ENCODE measurements at regions of chr14 and their contacts with region 1.

Region 1: DNA sequence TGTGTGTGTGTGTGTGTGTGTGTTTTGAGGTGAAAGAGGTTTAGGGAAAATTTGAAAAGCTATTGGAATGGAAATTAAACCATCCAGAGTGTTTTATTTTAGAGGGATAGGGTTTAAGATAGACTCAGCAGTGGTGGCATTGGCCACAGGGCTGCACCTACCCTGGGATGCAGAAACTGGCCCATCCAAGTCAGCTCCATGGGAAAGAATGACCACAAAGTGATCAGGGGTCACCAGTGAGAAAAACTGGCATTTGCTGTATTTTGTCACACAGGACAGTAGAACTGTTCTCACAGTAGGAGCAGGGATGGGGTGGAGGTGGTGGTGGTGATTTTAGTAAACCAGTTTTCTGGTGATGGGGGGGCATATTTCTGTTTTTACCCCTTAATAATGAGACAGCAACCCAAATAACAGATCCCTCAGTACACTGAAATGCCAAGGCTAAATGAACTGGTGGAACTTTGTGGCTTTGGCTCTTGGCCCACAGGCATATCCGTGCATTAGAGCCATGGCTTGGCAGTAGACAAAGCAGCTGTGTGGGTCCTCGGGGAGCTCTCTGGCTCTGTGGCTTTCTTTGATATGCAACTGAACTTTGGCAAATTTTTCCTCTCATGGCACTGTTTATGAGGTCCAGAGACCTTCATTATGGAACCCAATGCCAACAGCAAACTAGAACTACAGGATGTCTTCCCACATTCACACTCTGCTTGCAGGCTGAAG is 348.3 kb downstream of the ZFP36L1 start:
- DNase-seq: no peak
- CTCF ChIP-seq: no peak

Region 2: DNA sequence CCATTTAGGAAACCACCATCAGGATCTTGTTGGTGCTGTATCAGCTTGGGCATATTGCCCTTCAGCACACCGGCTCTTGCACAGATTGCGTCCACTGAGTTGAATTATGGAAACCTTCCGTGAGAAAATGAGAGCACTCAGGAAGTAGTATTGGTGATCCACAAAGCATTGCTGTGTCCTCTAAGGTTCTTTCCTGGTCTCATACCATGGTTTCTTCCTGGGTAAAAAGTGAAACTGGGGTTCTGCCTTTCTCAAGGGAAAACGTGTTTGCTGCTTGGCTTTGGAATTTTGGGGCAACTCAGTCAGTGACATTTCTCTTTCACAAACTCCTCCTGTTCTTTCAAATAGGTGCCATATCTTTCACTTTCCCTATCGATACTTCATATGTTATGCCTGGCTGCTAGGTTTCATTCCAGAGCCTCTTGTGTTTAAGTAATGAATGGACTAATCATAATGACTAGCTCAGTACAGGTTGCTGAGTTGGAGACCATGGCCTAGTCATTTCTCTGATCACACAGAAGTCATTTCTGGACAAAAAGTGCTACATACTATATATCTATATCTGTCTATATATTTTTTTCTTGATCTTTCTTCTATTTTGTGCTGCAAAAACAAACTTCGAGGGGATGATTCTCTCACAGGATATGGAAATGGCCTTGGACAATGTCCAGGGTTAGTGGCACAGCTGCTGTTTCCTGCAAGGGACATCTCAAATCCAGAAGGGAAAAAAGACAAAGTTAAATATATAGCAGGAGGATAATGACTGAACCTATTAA is 75.1 kb before region 1 on chr14:
- CTCF ChIA-PET with region 1: no interaction called
- POLR2A ChIA-PET with region 1: no interaction called
- DNase-seq: peak; percentile 31
- CTCF ChIP-seq: no peak

Region 3: GRCh38 chr14:68476212-68476907 is 31.8 kb after region 1 on chr14:
- CTCF ChIA-PET with region 1: interaction called, 10 read pairs
- POLR2A ChIA-PET with region 1: no interaction called
- DNase-seq: peak; percentile 54
- CTCF ChIP-seq: no peak

Region 4: DNA sequence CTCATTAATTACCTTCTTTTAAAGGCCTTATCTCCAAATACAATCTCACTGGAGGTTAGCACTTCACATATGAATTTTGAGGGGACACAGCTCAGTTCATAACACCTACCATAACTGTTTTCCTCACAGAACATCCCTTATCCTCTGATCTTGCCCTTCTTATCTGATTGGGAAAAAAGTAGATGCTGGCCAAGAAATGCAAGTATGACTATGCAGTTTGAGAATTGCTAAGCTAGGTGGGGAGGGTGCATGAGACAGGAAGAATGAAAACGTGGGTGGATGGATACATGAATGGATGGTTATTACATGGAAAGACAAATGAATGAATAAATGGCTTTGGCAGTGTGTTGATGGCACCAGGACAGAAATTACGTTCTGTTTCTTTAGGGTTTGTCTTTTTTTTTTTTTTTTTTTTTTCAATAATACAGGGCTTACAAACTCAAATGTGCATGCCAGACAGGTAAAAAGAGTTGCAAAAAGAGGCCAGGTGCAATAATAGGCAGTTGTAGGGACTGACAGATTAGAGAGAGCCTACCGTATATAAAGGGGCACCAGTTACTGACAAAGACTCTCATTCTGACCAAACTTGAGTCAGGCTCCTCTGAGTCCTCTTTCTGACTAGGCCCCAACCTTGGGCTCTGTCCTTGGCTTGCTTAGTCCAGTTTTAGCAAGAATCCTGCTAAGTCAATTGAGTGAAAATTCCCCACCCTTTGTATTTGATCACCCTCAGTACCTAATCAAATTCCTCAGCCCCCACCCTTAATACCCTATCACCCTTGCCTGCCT is 43.4 kb after region 1 on chr14:
- CTCF ChIA-PET with region 1: no interaction called
- POLR2A ChIA-PET with region 1: no interaction called
- DNase-seq: no peak
- CTCF ChIP-seq: no peak